WTC11 (cell line): ENCODE measurements at regions of chr17 and their contacts with region 1.

Region 1: DNA sequence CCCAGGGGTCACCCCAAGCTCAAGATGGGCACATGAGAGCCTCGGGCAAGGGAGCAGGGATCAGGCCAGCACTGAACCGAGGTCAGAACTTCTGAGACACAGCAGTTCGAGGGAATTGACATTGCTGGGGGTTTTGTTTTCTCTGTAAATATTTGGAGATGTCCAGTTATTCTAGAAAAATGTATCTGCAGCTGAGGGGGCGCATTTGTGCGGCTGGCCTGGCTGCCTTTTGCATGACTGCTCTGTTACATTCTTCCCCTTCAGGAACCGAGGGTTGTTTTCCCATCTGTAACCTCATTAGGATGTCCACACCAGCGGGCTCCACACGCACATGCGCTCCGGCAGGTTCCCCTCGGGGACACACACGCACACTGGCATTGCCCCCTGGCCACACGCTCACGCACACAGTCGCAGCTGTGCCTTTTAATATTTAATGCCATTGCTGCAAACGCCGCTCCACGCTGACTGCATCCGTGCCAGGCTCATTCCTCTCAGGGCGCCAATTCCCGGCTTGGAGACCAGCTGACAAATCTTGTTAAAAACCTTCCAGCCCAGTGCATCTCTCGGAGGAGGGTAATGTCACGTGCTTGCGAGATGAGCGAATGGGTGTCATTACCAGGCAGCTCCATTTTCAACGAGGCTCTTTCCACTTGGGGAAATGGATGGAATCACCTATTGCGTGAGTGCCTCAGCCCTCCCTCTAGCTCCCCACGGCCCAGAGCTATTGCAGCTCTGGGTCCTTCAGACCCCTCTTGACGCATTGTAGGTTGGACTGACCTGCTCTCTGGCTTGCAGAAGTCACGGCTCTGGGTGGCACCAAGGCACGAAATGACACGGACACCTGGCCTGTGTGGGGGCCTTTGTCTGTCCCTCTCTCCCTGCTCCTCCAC is 13.1 kb downstream of the CCR7 start:
- DNase-seq: peak; percentile 6
- ATAC-seq: no peak
- H3K4me3 Mint-ChIP-seq: no peak overlapping the region
- H3K27ac Mint-ChIP-seq: no peak overlapping the region
- H3K4me1 Mint-ChIP-seq: peaks cover 26% of the 10 kb centered on the region
- H3K27me3 Mint-ChIP-seq: peaks cover 2% of the 10 kb centered on the region
- CTCF ChIP-seq: no peak

Region 2: DNA sequence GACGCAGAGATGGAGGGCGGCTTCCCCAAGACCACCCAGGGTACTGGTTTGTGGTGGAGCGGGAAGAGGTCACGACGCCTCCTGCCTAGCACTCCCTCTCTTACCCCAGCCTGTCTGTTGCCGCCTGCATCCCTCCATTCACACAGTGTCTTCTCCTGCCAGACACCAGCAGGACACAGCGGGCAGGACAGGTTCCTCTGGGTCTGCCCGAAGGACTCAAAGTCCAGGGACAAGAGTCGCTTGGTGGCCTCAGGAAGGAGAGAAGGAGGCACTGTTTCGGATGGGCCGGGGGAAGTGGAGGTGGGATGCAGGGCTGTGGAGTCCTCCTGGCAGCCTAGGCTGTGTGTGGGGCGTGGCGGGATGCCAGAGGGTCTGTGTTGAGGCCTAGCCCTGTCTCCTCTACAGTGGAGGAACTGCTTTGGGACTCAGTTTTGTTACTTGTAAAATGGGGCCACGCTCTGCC is 31.1 kb before region 1 on chr17:
- CTCF ChIA-PET with region 1: no interaction called
- POLR2A ChIA-PET with region 1: no interaction called
- DNase-seq: no peak
- ATAC-seq: no peak
- H3K4me3 Mint-ChIP-seq: no peak overlapping the region
- H3K27ac Mint-ChIP-seq: no peak overlapping the region
- H3K4me1 Mint-ChIP-seq: peaks cover 21% of the 10 kb centered on the region
- H3K27me3 Mint-ChIP-seq: peaks cover 3% of the 10 kb centered on the region
- CTCF ChIP-seq: no peak

Region 3: DNA sequence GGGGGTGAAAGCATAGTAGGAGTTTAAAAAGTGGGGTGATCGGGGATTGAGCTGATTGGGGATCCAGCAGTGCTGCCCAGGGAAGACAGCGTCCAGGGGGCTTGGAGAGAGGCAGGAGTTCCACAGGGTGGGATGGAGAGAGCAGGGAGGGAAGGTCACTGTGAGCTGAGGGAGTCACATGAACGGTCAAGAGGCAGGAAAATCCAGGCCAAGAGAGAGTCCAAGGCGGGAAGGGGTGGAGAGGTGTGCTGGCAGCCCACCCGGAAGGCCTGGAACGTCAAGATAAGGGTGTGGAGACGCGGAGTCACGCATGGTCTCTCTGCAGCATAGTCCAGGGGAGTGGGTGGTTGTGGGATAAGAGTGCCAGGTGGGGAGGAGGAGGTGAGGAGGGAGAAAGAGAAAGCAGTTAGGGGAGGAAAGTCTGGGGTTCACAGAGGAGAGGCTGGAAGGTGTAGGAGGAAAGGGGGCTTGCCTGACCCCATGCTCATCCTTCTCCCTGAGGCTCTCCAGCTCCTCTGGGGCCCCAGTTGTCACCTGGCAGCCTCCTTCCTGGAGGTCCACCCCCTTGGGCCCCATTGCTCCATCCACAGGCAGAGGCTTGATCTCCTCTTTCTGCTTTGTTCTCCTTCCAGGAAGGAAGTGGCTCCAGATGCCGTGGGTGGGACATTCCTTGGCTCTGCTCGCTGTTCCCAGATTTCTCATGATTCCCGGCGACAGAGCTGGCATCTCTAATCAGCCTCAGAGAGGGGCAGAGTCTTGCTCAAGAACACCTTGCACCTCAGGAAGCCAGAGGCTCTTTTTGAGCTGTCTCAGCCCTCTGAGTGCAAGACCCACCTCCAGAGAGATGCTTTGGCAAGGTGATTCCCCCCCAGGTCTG is 15.6 kb before region 1 on chr17:
- CTCF ChIA-PET with region 1: interaction called, 127 read pairs
- POLR2A ChIA-PET with region 1: no interaction called
- DNase-seq: no peak
- ATAC-seq: no peak
- H3K4me3 Mint-ChIP-seq: no peak overlapping the region
- H3K27ac Mint-ChIP-seq: no peak overlapping the region
- H3K4me1 Mint-ChIP-seq: peaks cover 14% of the 10 kb centered on the region
- H3K27me3 Mint-ChIP-seq: no peaks in the 10 kb centered on the region; the same call in 1 of the 2 replicates
- CTCF ChIP-seq: no peak